ENCODE measurements at regions of chr1 and their contacts with region 1.

Region 1: GRCh38 chr1:192521734-192522133 is 53.8 kb upstream of the RGS1 start:
- DNase-seq: no peak
- ATAC-seq: no peak
- H3K4me3 ChIP-seq: no peak overlapping the region
- H3K27ac ChIP-seq: peak overlapping the region in 1 of 2 donors; percentile 28
- H3K4me1 ChIP-seq: peaks cover 6 to 20% of the 10 kb centered on the region in 2 donors
- H3K27me3 ChIP-seq: no peaks in the 10 kb centered on the region

Region 2: GRCh38 chr1:192559115-192560006 is 37.6 kb after region 1 on chr1:
- intact Hi-C with region 1: loop called in 1 of 2 experiments (anchors 5 kb)
- DNase-seq: no peak
- ATAC-seq: peak; percentile 81
- H3K4me3 ChIP-seq: no peak overlapping the region
- H3K27ac ChIP-seq: peak overlapping the region; percentile 88 to 93
- H3K4me1 ChIP-seq: peaks cover 0 to 4% of the 10 kb centered on the region in 2 donors
- H3K27me3 ChIP-seq: no peaks in the 10 kb centered on the region